ENCODE measurements at regions of chr12 and their contacts with region 1.

Region 1: DNA sequence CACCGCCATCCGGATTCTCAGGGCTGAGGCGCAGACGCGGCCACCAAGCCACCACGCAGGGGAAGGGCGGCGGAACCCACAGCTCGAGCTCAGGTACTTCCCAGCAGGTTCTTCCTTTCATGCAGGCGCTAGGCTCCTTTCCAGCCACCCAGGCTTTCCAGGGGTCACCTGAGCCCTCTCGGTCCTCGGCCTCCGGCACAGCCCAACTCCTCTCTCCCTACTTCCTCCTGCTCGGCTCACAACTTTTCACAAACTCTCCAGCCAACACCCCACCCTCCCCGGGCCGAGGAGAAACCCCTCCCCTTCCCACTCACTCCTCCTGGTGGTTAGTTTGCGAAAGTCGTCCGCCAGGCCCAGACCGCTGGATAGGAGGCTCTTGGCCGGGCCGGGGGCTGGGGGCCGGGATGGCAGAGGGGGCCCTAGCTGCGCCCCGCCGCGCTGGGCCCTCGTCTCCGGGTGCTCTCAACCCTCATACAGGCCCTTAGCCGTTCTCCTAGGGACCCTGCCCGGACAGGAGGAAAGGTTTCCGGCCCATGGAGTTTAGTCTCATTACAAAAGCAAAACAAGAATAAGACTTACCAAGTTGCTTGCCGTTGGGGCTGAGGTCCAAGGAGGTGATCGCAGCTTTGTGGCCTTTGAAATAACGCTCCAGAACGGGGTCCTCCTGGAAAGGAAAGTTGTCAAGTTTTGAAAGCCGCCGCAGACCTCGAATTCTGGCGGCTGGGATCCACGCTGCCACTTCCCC is at the start of gene GALNT4:
- DNase-seq: peak; percentile 84
- ATAC-seq: peak; percentile 64
- H3K4me3 Mint-ChIP-seq: peak within 1 kb of the TSS; percentile 81
- H3K27ac Mint-ChIP-seq: peak within 1 kb of the TSS; percentile 94
- H3K4me1 Mint-ChIP-seq: peaks cover 53% of the 10 kb centered on the region
- H3K27me3 Mint-ChIP-seq: no peaks in the 10 kb centered on the region
- total RNA-seq, gene GALNT4: 3.0 to 4.6 TPM

Region 2: GRCh38 chr12:88141770-88142609 is 1382.7 kb before region 1 on chr12 and contains the starts of genes CEP290 and TMTC3:
- CTCF ChIA-PET with region 1: no interaction called
- POLR2A ChIA-PET with region 1: no interaction called
- intact Hi-C with region 1: loop called in 1 of 2 experiments (anchors 2 kb)
- DNase-seq: peak; percentile 95
- ATAC-seq: peak; percentile 98
- H3K4me3 Mint-ChIP-seq: peak within 1 kb of the TSS; percentile 94
- H3K27ac Mint-ChIP-seq: peak within 1 kb of the TSS; percentile 92
- H3K4me1 Mint-ChIP-seq: peaks cover 42% of the 10 kb centered on the region
- H3K27me3 Mint-ChIP-seq: no peaks in the 10 kb centered on the region
- total RNA-seq, gene CEP290: 15.5 to 17.0 TPM
- total RNA-seq, gene TMTC3: 5.8 to 6.2 TPM

Region 3: DNA sequence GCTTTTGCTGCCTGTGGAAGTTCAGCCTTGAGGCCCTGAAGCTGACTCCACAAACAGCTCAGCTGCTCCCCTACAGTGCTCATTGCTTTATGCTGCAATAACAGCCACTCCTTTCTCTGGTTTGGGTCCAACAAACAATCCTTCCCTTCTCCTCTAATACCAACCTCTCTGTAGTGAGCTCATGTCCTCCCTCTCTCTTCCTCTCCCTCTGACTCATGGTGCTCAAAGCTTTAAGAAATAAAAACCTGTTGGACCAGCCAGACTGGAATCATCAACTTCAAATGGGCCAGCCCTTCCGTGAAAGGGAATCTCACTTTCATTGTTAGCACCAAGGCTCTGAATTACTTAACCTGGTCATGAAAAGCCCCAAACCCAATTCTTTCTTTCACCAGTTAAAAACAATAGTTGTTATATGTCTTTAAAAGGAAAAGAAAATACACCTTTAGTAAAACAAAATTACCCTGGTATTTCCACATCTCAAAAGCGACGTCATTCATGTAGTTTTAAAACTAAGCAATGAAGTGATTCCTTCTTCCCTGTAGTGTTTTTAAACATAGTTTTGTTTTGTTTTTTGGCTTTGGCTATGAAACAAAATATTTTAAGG is 298.8 kb before region 1 on chr12:
- CTCF ChIA-PET with region 1: no interaction called
- POLR2A ChIA-PET with region 1: no interaction called
- intact Hi-C with region 1: loop called (anchors 1 kb)
- DNase-seq: peak; percentile 71
- ATAC-seq: peak; percentile 80
- H3K4me3 Mint-ChIP-seq: peak overlapping the region; percentile 58
- H3K27ac Mint-ChIP-seq: peak overlapping the region; percentile 99
- H3K4me1 Mint-ChIP-seq: peaks cover 68% of the 10 kb centered on the region
- H3K27me3 Mint-ChIP-seq: no peaks in the 10 kb centered on the region

Region 4: DNA sequence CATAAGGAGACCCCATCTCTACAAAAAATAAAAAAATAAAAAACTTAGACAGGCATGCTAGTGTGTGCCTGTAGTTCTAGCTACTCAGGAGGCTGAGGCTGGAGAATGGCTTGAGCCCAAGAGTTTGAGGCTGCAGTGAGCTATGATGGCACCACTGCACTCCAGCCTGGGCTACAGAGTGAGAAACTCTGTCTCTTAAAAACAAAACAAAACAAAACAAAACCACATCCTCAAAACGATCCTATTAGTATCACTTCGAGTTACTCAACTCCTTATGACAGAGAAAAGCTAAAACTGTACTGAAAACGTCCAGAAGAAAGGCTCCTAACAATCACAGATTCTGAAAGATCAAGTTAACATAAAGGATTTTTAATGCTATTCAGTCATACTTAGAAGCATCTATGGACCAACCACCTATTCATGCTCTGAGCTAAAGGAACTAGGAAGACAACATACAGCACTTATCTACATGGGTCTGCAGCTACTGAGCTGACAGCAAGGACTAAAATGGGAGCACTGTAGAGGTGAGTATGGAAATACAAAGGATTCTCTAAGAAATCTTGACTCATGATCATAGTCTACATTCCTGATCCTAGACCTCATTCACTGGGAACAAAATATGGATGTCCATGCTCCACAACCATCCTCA is 97.1 kb before region 1 on chr12:
- CTCF ChIA-PET with region 1: no interaction called
- POLR2A ChIA-PET with region 1: no interaction called
- intact Hi-C with region 1: no loop called
- DNase-seq: peak; percentile 20
- ATAC-seq: peak; percentile 82
- H3K4me3 Mint-ChIP-seq: no peak overlapping the region
- H3K27ac Mint-ChIP-seq: peak overlapping the region; percentile 4
- H3K4me1 Mint-ChIP-seq: peaks cover 21% of the 10 kb centered on the region
- H3K27me3 Mint-ChIP-seq: no peaks in the 10 kb centered on the region

Region 5: DNA sequence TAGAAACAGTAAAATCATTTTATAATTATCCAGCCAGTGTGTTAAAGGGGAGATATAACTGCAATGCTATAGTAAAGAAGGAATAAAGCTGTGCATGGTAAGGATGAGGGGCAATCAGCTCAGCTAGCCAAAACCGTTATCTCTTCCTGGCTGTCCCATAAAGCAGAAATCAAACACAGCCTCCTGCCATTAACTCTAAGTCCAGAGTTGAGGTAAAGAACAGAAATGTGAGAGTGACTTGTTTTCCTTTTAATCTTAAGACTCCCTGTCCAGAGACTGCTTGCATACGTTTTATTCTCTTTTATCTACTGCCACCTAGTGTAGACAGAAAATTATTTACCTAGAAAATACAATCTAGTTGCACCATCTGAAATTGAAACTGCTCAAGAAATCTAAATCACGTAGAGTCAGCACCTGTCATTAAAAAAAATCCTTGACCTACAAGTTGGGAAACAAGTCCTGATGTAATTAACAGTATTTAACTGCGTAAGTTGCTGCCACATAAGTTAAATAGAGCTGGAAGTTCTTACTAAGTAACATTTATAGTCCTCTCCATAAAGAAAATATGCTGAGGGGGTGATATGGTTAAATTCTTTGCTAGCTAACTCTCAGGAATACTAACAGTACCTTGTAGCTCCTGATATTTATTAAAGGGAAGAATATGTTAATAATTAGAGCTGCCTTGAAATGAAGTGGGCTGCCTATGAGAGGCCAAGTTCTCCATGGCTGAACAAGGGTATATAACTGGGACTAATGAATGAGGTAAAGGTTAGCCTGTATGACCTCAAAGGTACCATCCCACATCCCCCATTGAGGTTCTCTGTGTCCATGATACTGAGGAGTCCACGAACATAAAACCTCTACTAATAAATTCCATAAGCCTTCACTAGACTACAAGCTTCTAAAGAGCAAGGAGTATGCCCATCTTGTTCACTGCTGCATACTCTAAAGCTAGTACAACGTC is 62.8 kb before region 1 on chr12:
- CTCF ChIA-PET with region 1: interaction called, 41 read pairs
- POLR2A ChIA-PET with region 1: no interaction called
- intact Hi-C with region 1: no loop called
- DNase-seq: no peak
- ATAC-seq: peak; percentile 93
- H3K4me3 Mint-ChIP-seq: peak overlapping the region; percentile 13
- H3K27ac Mint-ChIP-seq: peak overlapping the region; percentile 68
- H3K4me1 Mint-ChIP-seq: peaks cover 20% of the 10 kb centered on the region
- H3K27me3 Mint-ChIP-seq: no peaks in the 10 kb centered on the region

Region 6: GRCh38 chr12:89494411-89495231 is 30.1 kb before region 1 on chr12:
- CTCF ChIA-PET with region 1: interaction called, 5 read pairs
- POLR2A ChIA-PET with region 1: interaction called, 9 read pairs
- intact Hi-C with region 1: loop called (anchors 1 kb)
- DNase-seq: peak; percentile 72
- ATAC-seq: peak; percentile 90
- H3K4me3 Mint-ChIP-seq: peak overlapping the region; percentile 28
- H3K27ac Mint-ChIP-seq: peak overlapping the region; percentile 92
- H3K4me1 Mint-ChIP-seq: peaks cover 27% of the 10 kb centered on the region
- H3K27me3 Mint-ChIP-seq: no peaks in the 10 kb centered on the region

Measured in activated CD4-positive, alpha-beta T cell treated with anti-CD3 and anti-CD28 coated beads for 36 hours (primary cell).